ENCODE measurements at regions of chr12 and their contacts with region 1.

Region 1: GRCh38 chr12:94545935-94546771 is 86.5 kb upstream of the CEP83 start:
- DNase-seq: peak; percentile 19
- ATAC-seq: peak; percentile 98
- H3K4me3 ChIP-seq: no peak overlapping the region
- H3K27ac ChIP-seq: no peak overlapping the region
- H3K4me1 ChIP-seq: no peaks in the 10 kb centered on the region
- H3K27me3 ChIP-seq: no peaks in the 10 kb centered on the region
- CTCF ChIP-seq: peak; percentile 68 to 75 (median 71)
- EP300 ChIP-seq: no peak
- POLR2A ChIP-seq: no peak
- RAD21 ChIP-seq: peak; percentile 90

Region 2: DNA sequence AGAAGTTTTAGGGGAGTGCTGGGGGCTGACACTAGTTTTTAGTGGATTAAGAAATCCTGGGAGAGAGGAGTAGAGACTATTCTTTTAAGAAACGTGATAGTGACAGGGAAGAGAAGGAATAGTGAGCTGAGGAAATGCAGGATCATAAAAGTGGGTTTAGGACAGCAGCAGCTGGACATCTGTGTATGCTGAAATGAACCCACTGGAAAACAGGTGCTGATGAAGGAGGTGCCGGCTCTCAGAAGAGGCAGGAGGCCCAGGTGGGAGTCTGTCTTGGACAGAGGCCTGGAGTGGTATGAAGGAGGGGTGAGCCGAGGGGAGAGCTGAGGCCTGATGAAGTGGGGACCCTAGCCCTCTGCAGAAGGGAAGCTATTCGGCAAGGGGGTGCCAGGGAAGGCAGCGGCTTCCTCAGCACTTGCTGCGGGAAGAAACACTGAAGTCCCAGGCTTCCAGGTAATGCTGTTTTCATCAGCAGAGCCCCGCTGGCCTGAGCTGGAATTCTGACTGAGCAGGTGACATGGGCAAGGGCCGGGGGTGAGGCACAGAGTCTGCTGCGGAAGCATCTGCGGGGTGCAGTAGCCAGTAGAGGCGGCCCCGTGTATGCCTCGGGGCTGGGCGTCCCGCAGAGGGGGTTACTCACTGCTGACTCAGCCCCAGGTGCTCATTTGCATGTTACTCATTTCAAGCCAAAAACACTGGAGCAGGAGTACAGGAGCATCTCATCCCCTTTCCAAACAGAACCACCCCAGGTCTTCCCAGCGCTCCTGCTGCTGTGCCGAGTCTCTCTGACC is 14.5 kb after region 1 on chr12:
- CTCF ChIA-PET with region 1: interaction called, 5 read pairs
- POLR2A ChIA-PET with region 1: no interaction called
- RAD21 ChIA-PET with region 1: interaction called, 3 read pairs
- SMC1A ChIA-PET with region 1: interaction called, 15 read pairs
- in situ Hi-C with region 1: no loop called
- intact Hi-C with region 1: no loop called
- DNase-seq: peak; percentile 36
- ATAC-seq: peak; percentile 83
- H3K4me3 ChIP-seq: no peak overlapping the region
- H3K27ac ChIP-seq: peak overlapping the region; percentile 15; the same call in 1 of the 2 replicates
- H3K4me1 ChIP-seq: peaks cover 27% of the 10 kb centered on the region
- H3K27me3 ChIP-seq: no peaks in the 10 kb centered on the region
- CTCF ChIP-seq: no peak
- EP300 ChIP-seq: no peak; a peak in 1 of 4 replicates
- POLR2A ChIP-seq: peak; percentile 61
- RAD21 ChIP-seq: no peak

Region 3: DNA sequence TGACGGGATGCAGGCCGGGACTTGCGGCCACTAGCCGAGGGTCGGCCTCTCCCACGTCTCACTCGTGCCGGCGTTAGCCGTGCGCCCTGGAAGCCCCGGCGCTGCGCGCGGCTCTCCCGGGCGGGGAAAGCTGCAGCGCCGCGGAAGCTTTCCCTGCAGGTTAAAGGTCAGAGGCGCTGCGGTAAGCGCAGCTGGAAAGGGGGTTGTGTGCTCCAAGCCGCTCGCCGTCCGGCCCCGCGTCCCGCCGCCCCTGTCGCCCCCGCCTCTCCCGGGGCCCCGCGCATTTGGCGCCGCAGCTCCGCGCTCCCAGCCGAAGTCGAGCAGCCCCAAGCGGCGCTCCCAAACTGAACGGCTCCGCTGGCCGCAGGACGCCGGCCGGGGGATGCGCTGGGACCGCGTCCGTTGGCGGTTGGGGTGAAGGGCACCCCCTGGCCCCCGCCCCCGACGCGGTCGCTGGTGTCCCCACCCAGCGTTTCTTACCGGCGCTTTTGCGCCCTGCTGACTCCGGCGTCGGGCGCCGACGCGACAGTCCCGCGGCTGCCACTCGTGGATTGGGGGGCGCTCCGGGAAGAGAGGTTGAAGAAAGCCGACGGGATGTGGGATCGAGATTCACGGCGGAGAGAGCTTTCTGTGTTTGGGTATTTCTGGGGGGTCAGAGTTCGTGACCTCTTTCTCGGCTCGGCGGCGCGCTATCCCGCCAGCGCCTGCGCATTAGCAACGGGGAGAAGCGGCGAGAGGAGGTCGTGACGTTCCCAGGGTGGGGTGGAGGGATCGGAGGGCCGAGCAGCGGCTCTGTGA is 526.9 kb after region 1 on chr12 and contains the start of gene NR2C1:
- CTCF ChIA-PET with region 1: interaction called, 3 read pairs
- POLR2A ChIA-PET with region 1: no interaction called
- RAD21 ChIA-PET with region 1: no interaction called
- SMC1A ChIA-PET with region 1: interaction called, 3 read pairs
- in situ Hi-C with region 1: no loop called
- intact Hi-C with region 1: loop called (anchors 10 kb)
- DNase-seq: peak; percentile 63
- ATAC-seq: peak; percentile 98
- H3K4me3 ChIP-seq: peak within 1 kb of the TSS; percentile 88
- H3K27ac ChIP-seq: peak within 1 kb of the TSS; percentile 72
- H3K4me1 ChIP-seq: 0 out of 2 replicates have a peak, but pooled peaks cover 3% of the 10 kb centered on the region
- H3K27me3 ChIP-seq: no peaks in the 10 kb centered on the region
- CTCF ChIP-seq: no peak; a peak in 1 of 6 replicates
- EP300 ChIP-seq: no peak
- POLR2A ChIP-seq: peak; percentile 61
- RAD21 ChIP-seq: no peak
- polyA plus RNA-seq, gene NR2C1: 8.8 to 19.4 TPM

Measured in GM12878 (cell line).